Thyroid gland (tissue), 4 donors: ENCODE measurements at regions of chr6 and their contacts with region 1.

Region 1: GRCh38 chr6:36885461-36886401 is at the start of gene C6orf89:
- DNase-seq: peak; percentile 98 to 99
- H3K4me3 ChIP-seq: peak within 1 kb of the TSS; percentile 47 to 68 (median 63)
- H3K27ac ChIP-seq: peak within 1 kb of the TSS; percentile 89 to 98 (median 93)
- H3K4me1 ChIP-seq: peaks cover 6 to 19% of the 10 kb centered on the region in 2 donors
- H3K27me3 ChIP-seq: no peaks in the 10 kb centered on the region
- CTCF ChIP-seq: peak in 4 of 6 experiments; percentile 87 to 98 (median 94)
- POLR2A ChIP-seq: peak in 1 of 2 donors; percentile 75
- total RNA-seq, gene C6orf89: 58.2 to 89.6 (median 68.9) TPM

Region 2: DNA sequence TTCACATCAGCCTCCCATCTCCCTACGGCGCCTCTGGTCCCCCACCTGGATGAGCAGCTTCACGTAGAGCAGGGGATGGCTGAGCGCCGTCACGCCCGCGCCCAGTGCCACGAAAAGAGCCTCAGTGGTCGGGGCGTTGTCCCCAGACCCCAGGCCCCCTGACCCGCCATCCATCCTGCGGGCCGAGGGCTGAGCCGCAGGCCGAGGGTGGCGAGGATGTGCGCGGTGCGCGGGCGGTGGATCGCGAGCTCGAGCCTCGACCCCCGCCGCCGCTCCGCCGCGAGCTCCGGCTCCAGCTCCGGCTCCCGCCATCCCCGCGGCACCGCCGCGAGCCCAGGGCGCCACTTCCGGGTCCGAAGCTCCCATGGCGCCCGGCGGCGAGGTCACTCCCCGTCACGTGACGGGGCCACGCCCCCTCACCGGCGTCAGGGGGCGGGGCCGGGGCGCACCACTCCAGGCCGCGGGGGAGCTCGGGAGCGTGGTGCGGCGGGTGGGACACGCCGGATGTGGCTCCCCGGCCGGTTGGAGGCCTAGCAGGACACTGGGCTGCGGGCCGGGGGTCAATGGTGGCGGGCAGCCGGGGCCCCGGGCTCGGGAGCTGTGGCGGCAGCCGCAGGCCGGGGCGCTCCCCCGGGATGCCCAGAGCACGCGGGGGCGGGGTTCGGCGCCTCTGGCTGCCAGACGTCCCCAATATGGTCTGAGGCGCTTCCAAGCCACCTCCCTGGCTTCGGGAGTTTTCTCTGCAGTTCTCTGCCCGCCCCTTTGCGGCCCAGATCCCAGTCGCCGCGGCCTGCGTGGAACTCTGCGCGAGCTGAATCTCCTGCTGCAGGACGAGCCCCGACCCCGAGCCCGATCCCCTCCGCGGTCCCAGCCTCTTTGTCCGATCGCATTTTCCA is 100.3 kb after region 1 on chr6 and contains the start of gene MTCH1:
- intact Hi-C with region 1: loop called (anchors 10 kb)
- DNase-seq: peak; percentile 90 to 91
- H3K4me3 ChIP-seq: peak within 1 kb of the TSS; percentile 92 to 100 (median 100)
- H3K27ac ChIP-seq: peak within 1 kb of the TSS; percentile 95 to 98 (median 98)
- H3K4me1 ChIP-seq: peaks cover 53 to 58% of the 10 kb centered on the region in 2 donors
- H3K27me3 ChIP-seq: no peaks in the 10 kb centered on the region
- CTCF ChIP-seq: no peak
- POLR2A ChIP-seq: peak; percentile 95 to 98
- total RNA-seq, gene MTCH1: 571 to 1,096 (median 866) TPM